ENCODE measurements at regions of chr4 and their contacts with region 1.

Region 1: DNA sequence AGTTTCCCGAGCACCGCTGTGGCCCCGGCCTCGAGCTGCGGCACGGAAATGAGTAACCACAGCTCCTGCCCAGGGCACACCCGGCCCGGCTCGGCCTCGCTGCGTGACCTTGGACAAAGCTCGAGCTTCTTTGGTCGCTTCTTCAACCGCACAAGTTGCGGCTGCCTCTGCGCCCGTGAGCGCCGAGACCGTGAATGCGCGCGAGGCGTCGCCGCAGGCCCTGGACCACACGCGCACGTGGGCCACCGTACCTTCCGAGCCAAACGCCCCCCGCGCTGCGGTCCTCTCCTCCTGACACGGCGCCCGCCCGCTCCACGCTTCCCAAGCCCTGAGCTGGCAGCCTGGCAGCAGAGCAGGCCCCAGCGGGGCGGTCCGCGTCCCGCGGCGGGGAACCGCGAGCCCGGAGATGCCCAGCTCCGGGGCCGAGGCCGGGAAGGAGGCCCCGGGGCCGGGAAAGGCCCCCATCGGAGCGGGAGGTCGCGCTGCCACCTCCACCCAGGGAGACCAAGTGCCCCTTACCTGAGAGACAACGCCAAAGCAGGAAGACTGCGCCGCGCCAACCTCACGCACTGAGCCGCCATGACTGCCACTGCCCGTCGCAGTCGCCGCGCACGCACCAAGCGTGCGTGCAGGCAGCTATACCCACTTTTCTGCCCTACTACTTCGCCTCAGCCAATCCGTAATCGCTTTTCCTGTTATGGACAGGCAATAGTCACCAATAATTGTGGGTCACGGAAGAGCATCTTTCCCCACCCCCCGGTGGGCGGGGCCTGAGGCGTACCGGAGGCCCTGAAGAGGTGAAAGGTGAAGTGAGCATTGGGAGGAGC is at the start of gene GRPEL1:
- DNase-seq: peak; percentile 100
- ATAC-seq: peak; percentile 91
- H3K4me3 Mint-ChIP-seq: peak within 1 kb of the TSS; percentile 95
- H3K27ac Mint-ChIP-seq: peak within 1 kb of the TSS; percentile 90
- H3K4me1 Mint-ChIP-seq: peaks cover 44% of the 10 kb centered on the region
- H3K27me3 Mint-ChIP-seq: no peaks in the 10 kb centered on the region
- CTCF ChIP-seq: no peak
- total RNA-seq, gene GRPEL1: 31.8 and 41.3 TPM in 2 replicates

Region 2: DNA sequence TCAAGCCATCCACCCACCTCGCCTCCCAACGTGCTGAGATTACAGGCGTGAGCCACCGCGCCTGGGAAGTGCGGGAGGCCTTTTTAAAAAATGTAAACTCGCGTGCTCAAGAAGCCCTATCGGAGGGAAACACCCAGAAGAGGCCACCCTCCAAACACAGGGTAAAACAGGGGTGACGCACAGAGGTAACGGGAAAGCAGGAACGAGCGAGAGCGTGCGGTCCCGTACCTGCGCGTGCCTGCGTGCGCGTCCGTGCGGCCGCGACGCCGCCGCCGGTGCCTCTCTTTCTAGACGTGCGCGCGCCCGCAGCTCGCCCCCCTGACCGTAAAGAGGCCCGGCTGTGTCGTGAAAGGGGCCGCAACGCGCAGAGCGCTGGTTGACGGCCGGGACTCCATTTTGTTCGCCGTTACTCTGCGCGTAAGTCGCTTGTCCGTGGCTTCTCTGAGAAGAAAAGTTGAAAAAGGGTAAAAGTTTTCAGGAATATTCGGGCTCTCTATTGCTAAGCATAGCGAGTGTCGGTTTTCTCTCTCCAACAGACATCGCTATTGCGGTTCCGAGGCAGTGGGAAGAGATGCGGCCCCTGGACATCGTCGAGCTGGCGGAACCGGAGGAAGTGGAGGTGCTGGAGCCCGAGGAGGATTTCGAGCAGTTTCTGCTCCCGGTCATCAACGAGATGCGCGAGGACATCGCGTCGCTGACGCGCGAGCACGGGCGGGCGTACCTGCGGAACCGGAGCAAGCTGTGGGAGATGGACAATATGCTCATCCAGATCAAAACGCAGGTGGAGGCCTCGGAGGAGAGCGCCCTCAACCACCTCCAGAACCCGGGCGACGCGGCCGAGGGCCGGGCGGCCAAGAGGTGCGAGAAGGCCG is 427.1 kb before region 1 on chr4 and contains the start of gene MRFAP1:
- CTCF ChIA-PET with region 1: no interaction called
- POLR2A ChIA-PET with region 1: interaction called, 19 read pairs
- intact Hi-C with region 1: loop called (anchors 1 kb)
- DNase-seq: peak; percentile 91
- ATAC-seq: peak; percentile 84
- H3K4me3 Mint-ChIP-seq: peak within 1 kb of the TSS; percentile 99
- H3K27ac Mint-ChIP-seq: peak within 1 kb of the TSS; percentile 100
- H3K4me1 Mint-ChIP-seq: peaks cover 36% of the 10 kb centered on the region
- H3K27me3 Mint-ChIP-seq: no peaks in the 10 kb centered on the region
- CTCF ChIP-seq: no peak
- total RNA-seq, gene MRFAP1: 93.8 and 93.9 TPM in 2 replicates

Region 3: GRCh38 chr4:6716018-6716911 is 351.4 kb before region 1 on chr4 and contains the start of gene BLOC1S4:
- CTCF ChIA-PET with region 1: interaction called, 77 read pairs
- POLR2A ChIA-PET with region 1: interaction called, 30 read pairs
- intact Hi-C with region 1: loop called (anchors 1 kb)
- DNase-seq: peak; percentile 87
- ATAC-seq: peak; percentile 85
- H3K4me3 Mint-ChIP-seq: peak within 1 kb of the TSS; percentile 91
- H3K27ac Mint-ChIP-seq: peak within 1 kb of the TSS; percentile 96
- H3K4me1 Mint-ChIP-seq: peaks cover 39% of the 10 kb centered on the region
- H3K27me3 Mint-ChIP-seq: peaks cover 3% of the 10 kb centered on the region
- CTCF ChIP-seq: no peak
- total RNA-seq, gene BLOC1S4: 19.8 and 20.3 TPM in 2 replicates

Region 4: GRCh38 chr4:6885951-6886557 is 181.6 kb before region 1 on chr4:
- CTCF ChIA-PET with region 1: no interaction called
- POLR2A ChIA-PET with region 1: no interaction called
- intact Hi-C with region 1: loop called (anchors 5 kb)
- DNase-seq: no peak
- ATAC-seq: peak; percentile 49
- H3K4me3 Mint-ChIP-seq: no peak overlapping the region
- H3K27ac Mint-ChIP-seq: no peak overlapping the region
- H3K4me1 Mint-ChIP-seq: peaks cover 11% of the 10 kb centered on the region
- H3K27me3 Mint-ChIP-seq: no peaks in the 10 kb centered on the region
- CTCF ChIP-seq: no peak

Region 5: GRCh38 chr4:6974138-6974848 is 93.4 kb before region 1 on chr4:
- CTCF ChIA-PET with region 1: interaction called, 47 read pairs
- POLR2A ChIA-PET with region 1: interaction called, 9 read pairs
- intact Hi-C with region 1: loop called (anchors 1 kb)
- DNase-seq: peak; percentile 66
- ATAC-seq: peak; percentile 95
- H3K4me3 Mint-ChIP-seq: no peak overlapping the region
- H3K27ac Mint-ChIP-seq: no peak overlapping the region
- H3K4me1 Mint-ChIP-seq: peaks cover 32% of the 10 kb centered on the region
- H3K27me3 Mint-ChIP-seq: no peaks in the 10 kb centered on the region
- CTCF ChIP-seq: peak; percentile 39

Region 6: GRCh38 chr4:7042697-7043464 is 24.8 kb before region 1 on chr4 and contains the start of gene TADA2B:
- CTCF ChIA-PET with region 1: interaction called, 23 read pairs
- POLR2A ChIA-PET with region 1: interaction called, 132 read pairs
- intact Hi-C with region 1: loop called (anchors 1 kb)
- DNase-seq: peak; percentile 96
- ATAC-seq: peak; percentile 87
- H3K4me3 Mint-ChIP-seq: peak within 1 kb of the TSS; percentile 93
- H3K27ac Mint-ChIP-seq: peak within 1 kb of the TSS; percentile 85
- H3K4me1 Mint-ChIP-seq: peaks cover 54% of the 10 kb centered on the region
- H3K27me3 Mint-ChIP-seq: no peaks in the 10 kb centered on the region
- CTCF ChIP-seq: no peak
- total RNA-seq, gene TADA2B: 26.7 and 31.8 TPM in 2 replicates